OCI-LY7 (cell line): ENCODE measurements at regions of chr3 and their contacts with region 1.

Region 1: DNA sequence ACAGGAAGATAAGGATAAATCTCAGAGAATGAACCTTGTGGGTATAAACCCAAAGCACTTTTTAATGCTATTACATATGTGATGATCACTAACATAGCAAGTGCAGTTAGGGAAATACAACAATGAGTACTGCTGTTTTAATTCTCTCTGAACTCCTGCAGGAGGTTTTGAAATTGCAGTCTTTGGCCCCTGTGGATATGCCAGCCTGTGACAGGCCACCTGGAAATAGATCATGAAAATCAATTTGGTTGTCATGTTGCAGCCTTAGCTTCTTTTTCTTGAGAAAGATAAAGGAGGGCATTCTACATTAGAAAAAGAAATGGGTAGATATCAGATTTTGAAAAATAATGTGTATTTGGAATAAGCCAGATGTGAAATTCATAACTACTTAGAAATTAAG is 103.6 kb downstream of the RSRC1 start:
- DNase-seq: no peak
- H3K4me3 ChIP-seq: no peak overlapping the region
- H3K27ac ChIP-seq: no peak overlapping the region
- H3K4me1 ChIP-seq: no peaks in the 10 kb centered on the region
- CTCF ChIP-seq: no peak

Region 2: GRCh38 chr3:158152186-158152585 is 61.3 kb before region 1 on chr3:
- CTCF ChIA-PET with region 1: no interaction called
- POLR2A ChIA-PET with region 1: no interaction called
- intact Hi-C with region 1: no loop called
- DNase-seq: no peak
- H3K4me3 ChIP-seq: no peak overlapping the region
- H3K27ac ChIP-seq: no peak overlapping the region
- H3K4me1 ChIP-seq: no peaks in the 10 kb centered on the region
- CTCF ChIP-seq: no peak

Region 3: DNA sequence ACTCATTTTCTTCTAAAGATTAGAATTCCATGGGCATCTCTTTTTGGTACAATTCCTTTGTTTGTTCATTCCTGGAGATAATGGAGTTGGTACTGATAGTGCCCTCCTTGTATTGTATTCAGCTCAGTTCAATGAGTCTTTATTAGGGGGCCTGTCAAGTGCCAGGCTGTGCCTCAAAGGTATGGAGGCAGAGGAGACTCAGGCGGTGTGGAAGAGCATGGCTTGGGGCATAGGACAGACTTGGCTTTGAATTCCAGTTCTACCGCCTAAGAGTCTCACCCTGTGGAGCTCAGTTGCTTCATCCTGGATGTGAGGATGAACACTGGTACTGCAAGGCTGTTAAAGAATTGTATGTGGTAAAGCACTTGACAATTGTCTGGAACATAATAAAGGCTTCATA is 1578.6 kb after region 1 on chr3:
- CTCF ChIA-PET with region 1: no interaction called
- POLR2A ChIA-PET with region 1: interaction called, 10 read pairs
- intact Hi-C with region 1: no loop called
- DNase-seq: no peak
- H3K4me3 ChIP-seq: no peak overlapping the region
- H3K27ac ChIP-seq: no peak overlapping the region
- H3K4me1 ChIP-seq: no peaks in the 10 kb centered on the region
- CTCF ChIP-seq: no peak